PC-3 (cell line): ENCODE measurements at regions of chr12 and their contacts with region 1.

Region 1: GRCh38 chr12:50458606-50459005 is 46.2 kb upstream of the DIP2B start:
- DNase-seq: peak; percentile 48
- ATAC-seq: no peak
- H3K4me3 ChIP-seq: no peak overlapping the region
- H3K27ac ChIP-seq: no peak overlapping the region
- H3K4me1 ChIP-seq: peaks cover 11% of the 10 kb centered on the region
- H3K27me3 ChIP-seq: no peaks in the 10 kb centered on the region
- CTCF ChIP-seq: no peak

Region 2: GRCh38 chr12:50609280-50609874 is 150.8 kb after region 1 on chr12:
- CTCF ChIA-PET with region 1: no interaction called
- POLR2A ChIA-PET with region 1: interaction called, 10 read pairs
- intact Hi-C with region 1: no loop called
- DNase-seq: no peak
- ATAC-seq: no peak
- H3K4me3 ChIP-seq: no peak overlapping the region
- H3K27ac ChIP-seq: no peak overlapping the region
- H3K4me1 ChIP-seq: 0 out of 2 replicates have a peak, but pooled peaks cover 4% of the 10 kb centered on the region
- H3K27me3 ChIP-seq: no peaks in the 10 kb centered on the region
- CTCF ChIP-seq: no peak